ENCODE measurements at regions of chr5 and their contacts with region 1.

Region 1: GRCh38 chr5:149834246-149834855 is 104.2 kb downstream of the PPARGC1B start:
- DNase-seq: peak in 4 of 10 donors; percentile 15 to 69 (median 50)
- H3K4me3 ChIP-seq: no peak overlapping the region
- H3K27ac ChIP-seq: peak overlapping the region in 1 of 59 donors; percentile 37
- H3K27me3 ChIP-seq: no peaks in the 10 kb centered on the region
- CTCF ChIP-seq: peak; percentile 27 to 81 (median 67)

Region 2: DNA sequence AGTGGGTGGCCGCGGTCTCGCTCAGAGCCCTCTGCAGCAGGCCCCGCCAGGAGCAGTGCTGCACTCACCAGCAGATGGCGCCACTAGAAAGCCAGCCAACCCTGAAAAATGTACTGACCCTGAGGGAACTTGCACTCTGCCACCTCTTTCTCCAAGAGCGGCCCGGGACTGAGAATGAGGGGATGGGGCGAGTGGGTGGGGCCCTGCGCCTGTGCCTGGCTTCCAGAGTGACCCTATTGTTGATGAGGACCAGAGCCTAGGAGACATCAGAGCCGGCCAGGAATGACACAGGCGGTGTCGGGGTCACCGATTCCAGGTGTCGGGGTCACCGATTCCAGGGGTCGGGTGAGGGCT is 452.4 kb before region 1 on chr5:
- intact Hi-C with region 1: no loop called
- DNase-seq: peak in 9 of 10 donors; percentile 37 to 72 (median 54)
- H3K4me3 ChIP-seq: peak overlapping the region in 1 of 59 donors; percentile 5
- H3K27ac ChIP-seq: peak overlapping the region in 15 of 59 donors; percentile 3 to 77 (median 49)
- H3K27me3 ChIP-seq: peaks cover 0 to 3% (median 0%) of the 10 kb centered on the region in 45 donors
- CTCF ChIP-seq: peak; percentile 61 to 94 (median 88)

Region 3: GRCh38 chr5:149960272-149961185 is 126.2 kb after region 1 on chr5 and contains the start of gene SLC26A2:
- intact Hi-C with region 1: loop called (anchors 5 to 10 kb)
- DNase-seq: peak; percentile 96 to 100 (median 98)
- H3K4me3 ChIP-seq: peak within 1 kb of the TSS; percentile 70 to 99 (median 90)
- H3K27ac ChIP-seq: peak within 1 kb of the TSS; percentile 41 to 96 (median 84)
- H3K27me3 ChIP-seq: no peaks in the 10 kb centered on the region
- CTCF ChIP-seq: peak in 38 of 56 donors; percentile 4 to 65 (median 32)
- total RNA-seq, gene SLC26A2: 2.4 to 17.4 (median 6.9) TPM

Region 4: DNA sequence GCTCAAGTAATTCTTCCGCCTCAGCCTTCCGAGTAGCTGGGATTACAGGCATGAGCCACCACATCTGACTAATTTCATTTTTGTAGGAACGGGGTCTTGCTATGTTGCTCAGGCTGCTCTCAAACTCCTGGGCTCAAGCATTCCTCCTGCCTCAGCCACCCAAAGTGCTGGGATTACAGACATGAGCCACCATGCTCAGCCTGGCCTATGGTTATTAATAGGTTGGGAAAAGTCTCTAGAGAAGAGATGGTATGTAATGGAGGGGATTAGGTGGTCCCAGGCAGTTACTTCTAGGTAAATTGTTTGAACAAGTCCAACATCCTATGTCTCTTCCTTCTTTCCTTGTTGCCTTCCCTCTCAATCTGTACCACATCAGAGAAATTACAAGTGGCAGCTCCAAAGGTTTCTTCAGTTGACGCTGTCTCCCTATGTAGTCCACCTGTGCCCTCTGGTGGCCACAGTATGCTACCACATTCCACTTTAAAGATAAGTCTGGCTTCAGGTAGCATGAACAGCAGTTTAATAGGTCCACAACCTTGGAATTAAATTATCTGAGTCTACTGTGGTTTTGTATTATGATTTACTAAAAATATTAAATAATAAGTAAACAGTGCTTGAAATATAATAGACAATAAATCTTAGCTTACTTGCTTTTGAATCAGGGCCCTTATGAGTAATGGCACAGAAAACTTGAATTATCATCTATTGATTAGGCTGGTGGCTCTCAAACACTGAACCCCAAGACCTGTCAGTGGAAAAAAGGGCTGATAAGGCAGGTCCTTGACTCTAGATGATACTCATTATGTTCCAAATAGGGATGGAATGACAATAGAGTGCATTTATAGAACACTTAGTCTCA is 156.4 kb after region 1 on chr5:
- intact Hi-C with region 1: loop called (anchors 2 kb)
- DNase-seq: peak; percentile 34 to 84 (median 61)
- H3K4me3 ChIP-seq: no peak overlapping the region
- H3K27ac ChIP-seq: no peak overlapping the region
- H3K27me3 ChIP-seq: no peaks in the 10 kb centered on the region
- CTCF ChIP-seq: peak; percentile 78 to 98 (median 91)

Measured in dorsolateral prefrontal cortex (tissue), 120 donors.